Caco-2 (cell line): ENCODE measurements at regions of chr7 and their contacts with region 1.

Region 1: GRCh38 chr7:104923010-104923421 is 91.0 kb upstream of the KMT2E start:
- DNase-seq: peak; percentile 76 to 79
- H3K4me3 ChIP-seq: no peak overlapping the region
- H3K4me3 Mint-ChIP-seq: no peak overlapping the region
- H3K27ac Mint-ChIP-seq: no peak overlapping the region
- H3K4me1 ChIP-seq: peaks cover 23% of the 10 kb centered on the region
- H3K4me1 Mint-ChIP-seq: peaks cover 24% of the 10 kb centered on the region
- H3K27me3 ChIP-seq: no peaks in the 10 kb centered on the region
- H3K27me3 Mint-ChIP-seq: no peaks in the 10 kb centered on the region
- CTCF ChIP-seq: peak; percentile 73 to 91

Region 2: DNA sequence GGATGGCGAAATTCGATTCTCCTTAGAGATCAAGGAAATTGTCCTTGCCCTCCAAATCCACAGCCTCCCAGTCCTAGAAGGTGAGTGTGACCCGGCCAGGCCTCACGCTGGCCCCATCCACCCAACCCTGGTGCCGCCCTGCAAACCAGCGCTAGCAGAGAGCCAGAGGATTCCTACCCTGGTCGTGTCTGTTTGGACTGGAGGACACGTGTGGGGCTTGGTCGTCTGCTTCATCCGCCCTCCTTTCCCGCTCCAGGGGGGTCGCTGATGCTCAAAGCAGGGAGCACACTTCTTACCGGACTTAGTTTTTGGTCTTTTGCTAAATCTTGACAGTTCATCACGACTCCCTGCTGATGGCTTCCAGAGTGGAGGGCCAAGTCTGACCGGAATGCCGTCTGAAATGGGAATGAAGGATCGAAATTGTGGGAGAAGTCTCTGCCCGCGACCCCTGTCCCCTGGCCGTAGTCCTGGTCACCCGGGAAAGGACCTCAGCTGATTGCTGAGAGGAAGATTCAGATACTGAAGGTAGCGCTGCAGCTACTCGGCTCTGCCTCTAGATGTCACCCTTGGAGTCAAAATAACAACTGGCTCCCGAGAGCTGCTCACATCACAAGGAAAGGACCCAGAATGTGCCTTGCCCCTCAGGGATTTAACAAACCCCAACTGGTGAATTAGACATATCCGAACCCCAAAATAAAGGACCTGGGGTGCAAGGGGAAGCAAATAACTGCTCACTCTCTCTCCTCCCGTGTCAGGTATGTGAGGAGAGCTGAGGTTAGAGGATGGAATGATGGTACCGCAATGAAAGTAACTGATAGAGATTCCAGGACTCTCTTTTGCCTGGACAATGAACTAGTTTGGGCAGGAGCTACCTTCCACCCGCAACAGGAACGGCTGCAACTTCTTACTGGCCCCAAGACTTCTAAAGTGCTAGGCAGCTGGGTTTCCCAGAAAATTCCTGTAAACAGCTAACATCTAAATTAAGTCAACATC is 691.7 kb before region 1 on chr7:
- CTCF ChIA-PET with region 1: interaction called, 12 read pairs
- POLR2A ChIA-PET with region 1: no interaction called
- intact Hi-C with region 1: no loop called
- DNase-seq: peak; percentile 61
- H3K4me3 ChIP-seq: no peak overlapping the region
- H3K4me3 Mint-ChIP-seq: no peak overlapping the region
- H3K27ac Mint-ChIP-seq: no peak overlapping the region
- H3K4me1 ChIP-seq: peaks cover 15% of the 10 kb centered on the region
- H3K4me1 Mint-ChIP-seq: peaks cover 16% of the 10 kb centered on the region
- H3K27me3 ChIP-seq: no peaks in the 10 kb centered on the region
- H3K27me3 Mint-ChIP-seq: no peaks in the 10 kb centered on the region
- CTCF ChIP-seq: peak; percentile 84 to 91

Region 3: DNA sequence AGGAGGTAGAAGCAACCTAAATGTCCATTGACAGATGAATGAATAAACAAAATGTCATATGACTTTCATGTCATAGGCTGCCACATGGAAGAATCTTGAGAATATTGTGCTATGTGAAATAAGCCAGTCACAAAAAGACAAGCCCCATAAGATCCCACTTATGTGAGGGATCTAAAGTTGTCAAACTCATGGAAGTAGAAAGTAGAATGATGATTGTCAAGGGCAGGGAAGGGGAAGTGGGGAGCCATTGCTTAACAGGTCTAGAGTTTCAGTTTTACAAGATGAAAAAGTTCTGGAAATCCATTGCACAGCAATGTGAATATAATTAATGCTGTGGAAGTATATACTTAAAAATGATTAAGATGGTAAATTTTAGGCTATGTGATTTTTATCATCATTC is 138.3 kb before region 1 on chr7:
- CTCF ChIA-PET with region 1: interaction called, 12 read pairs
- POLR2A ChIA-PET with region 1: no interaction called
- intact Hi-C with region 1: no loop called
- DNase-seq: no peak
- H3K4me3 ChIP-seq: no peak overlapping the region
- H3K4me3 Mint-ChIP-seq: no peak overlapping the region
- H3K27ac Mint-ChIP-seq: no peak overlapping the region
- H3K4me1 ChIP-seq: no peaks in the 10 kb centered on the region
- H3K4me1 Mint-ChIP-seq: no peaks in the 10 kb centered on the region
- H3K27me3 ChIP-seq: no peaks in the 10 kb centered on the region
- H3K27me3 Mint-ChIP-seq: peaks cover 9% of the 10 kb centered on the region
- CTCF ChIP-seq: no peak

Region 4: DNA sequence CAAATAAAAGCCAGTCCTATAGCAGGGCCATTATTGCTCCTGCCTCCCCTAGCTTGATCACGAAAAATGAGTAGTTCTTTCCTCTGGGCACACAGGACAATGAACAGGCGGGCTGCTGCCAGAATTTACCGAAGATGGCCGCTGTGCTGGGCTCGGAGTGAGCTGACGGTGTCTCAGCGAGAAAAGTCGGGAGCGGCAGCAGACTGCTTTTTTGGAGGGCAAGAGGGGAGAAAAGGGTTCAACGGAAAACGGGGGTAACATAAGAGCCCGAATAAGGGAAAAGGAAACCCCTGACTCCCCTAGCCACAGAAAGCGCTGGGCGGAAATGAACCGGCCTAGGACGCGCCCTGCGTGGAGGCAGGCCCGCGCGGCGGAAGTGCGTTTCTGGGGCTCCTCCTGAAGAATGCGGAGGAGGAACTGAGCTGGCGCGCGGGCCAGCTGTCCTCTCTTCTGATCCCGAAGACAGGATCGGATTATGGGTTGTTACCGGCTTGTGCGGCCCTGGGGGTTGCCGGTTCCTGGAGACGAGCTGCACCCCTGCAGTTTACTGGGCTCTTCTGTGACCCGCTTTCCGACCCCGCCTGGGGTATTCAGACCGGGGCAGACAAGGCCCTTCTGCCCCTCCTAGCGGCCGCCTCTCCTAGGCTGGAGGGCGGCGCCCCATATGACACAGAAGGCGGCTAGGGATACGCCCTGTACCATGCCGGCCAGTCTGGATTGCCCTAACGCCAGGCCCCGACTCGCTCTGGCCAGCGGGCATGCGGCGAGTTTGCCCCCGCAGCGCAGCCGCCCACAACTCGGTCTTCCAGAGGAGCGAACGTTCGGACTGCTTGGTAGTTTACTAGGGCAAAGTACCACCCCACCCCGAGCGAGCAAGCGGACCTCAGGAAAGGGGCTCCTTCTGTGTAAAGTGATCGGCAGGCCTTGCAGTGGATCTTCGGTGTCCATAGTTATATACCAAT is 60.8 kb after region 1 on chr7:
- CTCF ChIA-PET with region 1: no interaction called
- POLR2A ChIA-PET with region 1: interaction called, 4 read pairs
- intact Hi-C with region 1: loop called (anchors 2 kb)
- DNase-seq: peak; percentile 88 to 90
- H3K4me3 ChIP-seq: peak overlapping the region; percentile 41
- H3K4me3 Mint-ChIP-seq: peak overlapping the region; percentile 88
- H3K27ac Mint-ChIP-seq: peak overlapping the region; percentile 99
- H3K4me1 ChIP-seq: peaks cover 55% of the 10 kb centered on the region
- H3K4me1 Mint-ChIP-seq: peaks cover 25% of the 10 kb centered on the region
- H3K27me3 ChIP-seq: no peaks in the 10 kb centered on the region
- H3K27me3 Mint-ChIP-seq: no peaks in the 10 kb centered on the region
- CTCF ChIP-seq: peak in 1 of 2 experiments; percentile 72

Region 5: GRCh38 chr7:105325216-105325904 is 402.3 kb after region 1 on chr7:
- CTCF ChIA-PET with region 1: no interaction called
- POLR2A ChIA-PET with region 1: no interaction called
- intact Hi-C with region 1: loop called (anchors 10 kb)
- DNase-seq: no peak
- H3K4me3 ChIP-seq: no peak overlapping the region
- H3K4me3 Mint-ChIP-seq: no peak overlapping the region
- H3K27ac Mint-ChIP-seq: no peak overlapping the region
- H3K4me1 ChIP-seq: no peaks in the 10 kb centered on the region
- H3K4me1 Mint-ChIP-seq: peaks cover 6% of the 10 kb centered on the region
- H3K27me3 ChIP-seq: no peaks in the 10 kb centered on the region
- H3K27me3 Mint-ChIP-seq: no peaks in the 10 kb centered on the region
- CTCF ChIP-seq: no peak

Region 6: DNA sequence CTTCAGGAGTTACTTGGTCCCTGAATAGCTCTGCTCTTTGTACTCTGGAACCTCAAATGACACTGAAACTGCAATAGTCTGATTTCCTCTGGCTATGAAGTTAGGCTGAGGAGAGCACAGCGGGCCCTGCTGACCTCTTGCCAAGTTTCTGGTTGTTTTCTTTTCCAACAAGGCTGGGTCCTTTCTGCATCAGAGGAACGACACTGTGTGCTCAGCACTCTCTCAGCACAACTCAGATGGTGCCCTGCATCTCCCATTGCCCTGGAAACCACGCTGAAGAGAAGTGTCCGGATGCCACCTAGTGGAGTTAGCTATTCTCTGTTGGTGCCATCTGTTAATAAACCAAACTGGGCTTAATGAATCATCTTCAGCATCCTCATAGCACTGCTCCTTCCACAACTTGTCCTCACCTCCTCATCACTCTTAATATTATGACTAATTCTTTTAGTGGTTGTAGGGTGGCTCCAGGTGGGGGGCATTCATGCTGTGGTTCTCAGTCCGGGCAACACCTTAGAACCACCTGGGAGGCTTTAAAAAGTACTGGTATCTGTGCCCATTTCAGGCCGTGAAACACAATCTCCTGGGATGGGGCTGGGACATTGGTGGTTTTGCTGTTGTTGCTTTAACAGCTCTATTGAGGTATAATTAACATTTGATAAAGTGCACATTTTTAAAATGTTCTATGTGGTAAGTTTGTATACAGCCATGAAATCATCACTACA is 666.5 kb after region 1 on chr7:
- CTCF ChIA-PET with region 1: no interaction called
- POLR2A ChIA-PET with region 1: no interaction called
- intact Hi-C with region 1: loop called (anchors 1 kb)
- DNase-seq: peak; percentile 63 to 66
- H3K4me3 ChIP-seq: no peak overlapping the region
- H3K4me3 Mint-ChIP-seq: no peak overlapping the region
- H3K27ac Mint-ChIP-seq: no peak overlapping the region
- H3K4me1 ChIP-seq: no peaks in the 10 kb centered on the region
- H3K4me1 Mint-ChIP-seq: no peaks in the 10 kb centered on the region
- H3K27me3 ChIP-seq: no peaks in the 10 kb centered on the region
- H3K27me3 Mint-ChIP-seq: no peaks in the 10 kb centered on the region
- CTCF ChIP-seq: peak; percentile 40 to 66